GM12878 (cell line): ENCODE measurements at regions of chr17 and their contacts with region 1.

Region 1: GRCh38 chr17:39057701-39058206 is 90.6 kb upstream of the FBXO47 start:
- DNase-seq: no peak
- ATAC-seq: no peak
- H3K4me3 ChIP-seq: peak overlapping the region; percentile 43; the same call in 1 of the 2 replicates
- H3K27ac ChIP-seq: no peak overlapping the region
- H3K4me1 ChIP-seq: 0 out of 2 replicates have a peak, but pooled peaks cover 4% of the 10 kb centered on the region
- H3K27me3 ChIP-seq: no peaks in the 10 kb centered on the region
- CTCF ChIP-seq: no peak
- EP300 ChIP-seq: no peak
- POLR2A ChIP-seq: no peak
- RAD21 ChIP-seq: no peak

Region 2: GRCh38 chr17:39069114-39069756 is 11.5 kb after region 1 on chr17:
- CTCF ChIA-PET with region 1: interaction called, 3 read pairs
- POLR2A ChIA-PET with region 1: no interaction called
- RAD21 ChIA-PET with region 1: no interaction called
- SMC1A ChIA-PET with region 1: interaction called, 10 read pairs
- in situ Hi-C with region 1: no loop called
- intact Hi-C with region 1: no loop called
- DNase-seq: no peak
- ATAC-seq: peak; percentile 89
- H3K4me3 ChIP-seq: no peak overlapping the region
- H3K27ac ChIP-seq: no peak overlapping the region
- H3K4me1 ChIP-seq: no peaks in the 10 kb centered on the region
- H3K27me3 ChIP-seq: peaks cover 0 to 5% of the 10 kb centered on the region in 2 experiments; a peak in 2 of 4 replicates
- CTCF ChIP-seq: peak; percentile 68 to 79 (median 69); a peak in 5 of 6 replicates
- EP300 ChIP-seq: no peak
- POLR2A ChIP-seq: no peak
- RAD21 ChIP-seq: peak; percentile 82